ENCODE measurements at regions of chr6 and their contacts with region 1.

Region 1: DNA sequence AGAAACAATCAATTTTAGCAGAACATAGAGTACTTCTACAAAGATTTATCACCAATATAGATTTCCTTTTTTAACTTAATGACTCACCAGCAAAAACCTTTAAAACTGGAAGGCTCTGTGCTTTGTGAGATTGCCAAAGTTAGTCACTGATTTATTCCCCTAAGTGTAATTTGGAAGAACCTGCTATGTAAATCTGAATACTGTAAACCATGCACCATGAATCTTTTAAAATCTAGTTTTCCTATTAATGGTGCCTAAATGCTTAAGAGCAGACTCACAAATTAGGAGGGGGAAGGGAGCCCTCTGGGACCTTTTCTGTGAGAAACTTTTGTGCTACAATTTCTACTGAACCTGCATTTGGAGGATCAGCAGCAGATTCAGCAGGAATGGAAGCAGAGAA is 57.8 kb upstream of the PNRC1 start:
- DNase-seq: no peak
- ATAC-seq: peak in 2 of 4 donors; percentile 17 to 38
- H3K4me3 ChIP-seq: no peak overlapping the region
- H3K27ac ChIP-seq: peak overlapping the region in 6 of 12 donors; percentile 13 to 87 (median 60)
- H3K4me1 ChIP-seq: peaks cover 0 to 40% (median 26%) of the 10 kb centered on the region in 12 donors
- H3K27me3 ChIP-seq: no peaks in the 10 kb centered on the region
- CTCF ChIP-seq: no peak
- POLR2A ChIP-seq: no peak

Region 2: GRCh38 chr6:88989215-88989614 is 33.6 kb before region 1 on chr6:
- intact Hi-C with region 1: loop called in 1 of 10 experiments (anchors 5 kb)
- DNase-seq: no peak
- ATAC-seq: no peak
- H3K4me3 ChIP-seq: no peak overlapping the region
- H3K27ac ChIP-seq: no peak overlapping the region
- H3K4me1 ChIP-seq: peaks cover 0 to 8% (median 0%) of the 10 kb centered on the region in 12 donors
- H3K27me3 ChIP-seq: no peaks in the 10 kb centered on the region
- CTCF ChIP-seq: no peak
- POLR2A ChIP-seq: no peak

Region 3: DNA sequence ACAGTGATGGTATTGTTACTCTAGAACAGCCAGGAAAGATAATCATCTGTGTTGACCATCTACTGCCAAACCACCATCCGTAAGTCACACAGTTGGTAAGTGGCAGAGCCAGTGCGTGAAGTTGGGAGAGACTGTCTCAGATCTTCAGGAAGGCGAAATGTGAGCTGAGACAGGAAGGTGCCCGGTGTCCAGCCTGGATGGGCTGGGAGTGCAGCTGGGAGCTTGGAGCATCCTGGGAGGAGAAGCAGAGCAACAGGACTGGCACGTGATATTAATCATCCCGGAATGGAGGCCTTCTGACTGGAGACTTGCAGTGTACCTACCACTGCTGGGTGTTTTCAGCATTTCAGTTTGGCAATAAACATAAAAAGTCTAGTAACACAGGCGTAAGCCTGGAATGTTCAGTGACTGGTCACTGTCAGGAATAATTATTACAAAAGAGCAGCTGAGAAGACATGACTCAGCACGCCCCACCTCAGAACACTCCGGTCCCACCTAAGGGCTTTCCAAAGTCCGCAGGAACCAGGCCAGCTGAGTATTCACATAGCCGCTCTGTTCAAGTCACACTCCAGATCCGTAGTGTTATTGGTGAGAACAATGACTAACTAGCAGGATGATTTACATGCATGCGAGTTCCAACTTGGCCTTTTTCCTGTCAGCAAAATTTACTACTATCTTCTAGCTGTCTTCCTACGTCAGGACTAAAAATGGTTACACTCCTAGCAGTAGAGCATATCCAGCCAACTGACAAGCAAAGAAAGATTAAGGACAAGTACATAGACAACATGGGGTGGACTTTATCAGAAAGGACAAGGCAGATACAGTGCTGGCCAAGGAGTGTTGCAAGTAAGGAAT is 12.7 kb after region 1 on chr6:
- intact Hi-C with region 1: loop called in 1 of 10 experiments (anchors 1 kb)
- DNase-seq: peak; percentile 66 to 95 (median 71)
- ATAC-seq: peak; percentile 92 to 96 (median 94)
- H3K4me3 ChIP-seq: peak overlapping the region in 10 of 12 donors; percentile 0 to 29 (median 14)
- H3K27ac ChIP-seq: peak overlapping the region; percentile 62 to 97 (median 82)
- H3K4me1 ChIP-seq: peaks cover 4 to 54% (median 25%) of the 10 kb centered on the region in 12 donors
- H3K27me3 ChIP-seq: no peaks in the 10 kb centered on the region
- CTCF ChIP-seq: no peak
- POLR2A ChIP-seq: no peak

Measured in heart left ventricle (tissue), 16 donors.